ENCODE measurements at regions of chr5 and their contacts with region 1.

Region 1: GRCh38 chr5:136249678-136250266 is 56.8 kb upstream of the SMIM32 start:
- DNase-seq: peak; percentile 25
- H3K4me3 Mint-ChIP-seq: no peak overlapping the region
- H3K27ac Mint-ChIP-seq: no peak overlapping the region
- H3K4me1 Mint-ChIP-seq: no peaks in the 10 kb centered on the region
- H3K27me3 Mint-ChIP-seq: peaks cover 8% of the 10 kb centered on the region

Region 2: GRCh38 chr5:136222583-136223274 is 27.0 kb before region 1 on chr5:
- CTCF ChIA-PET with region 1: no interaction called
- POLR2A ChIA-PET with region 1: no interaction called
- intact Hi-C with region 1: no loop called
- DNase-seq: no peak
- H3K4me3 Mint-ChIP-seq: no peak overlapping the region
- H3K27ac Mint-ChIP-seq: no peak overlapping the region
- H3K4me1 Mint-ChIP-seq: no peaks in the 10 kb centered on the region
- H3K27me3 Mint-ChIP-seq: peaks cover 11% of the 10 kb centered on the region

Region 3: GRCh38 chr5:136605638-136606037 is 355.9 kb after region 1 on chr5:
- CTCF ChIA-PET with region 1: no interaction called
- POLR2A ChIA-PET with region 1: no interaction called
- intact Hi-C with region 1: no loop called
- DNase-seq: no peak
- H3K4me3 Mint-ChIP-seq: no peak overlapping the region
- H3K27ac Mint-ChIP-seq: no peak overlapping the region
- H3K4me1 Mint-ChIP-seq: no peaks in the 10 kb centered on the region
- H3K27me3 Mint-ChIP-seq: no peaks in the 10 kb centered on the region

Region 4: DNA sequence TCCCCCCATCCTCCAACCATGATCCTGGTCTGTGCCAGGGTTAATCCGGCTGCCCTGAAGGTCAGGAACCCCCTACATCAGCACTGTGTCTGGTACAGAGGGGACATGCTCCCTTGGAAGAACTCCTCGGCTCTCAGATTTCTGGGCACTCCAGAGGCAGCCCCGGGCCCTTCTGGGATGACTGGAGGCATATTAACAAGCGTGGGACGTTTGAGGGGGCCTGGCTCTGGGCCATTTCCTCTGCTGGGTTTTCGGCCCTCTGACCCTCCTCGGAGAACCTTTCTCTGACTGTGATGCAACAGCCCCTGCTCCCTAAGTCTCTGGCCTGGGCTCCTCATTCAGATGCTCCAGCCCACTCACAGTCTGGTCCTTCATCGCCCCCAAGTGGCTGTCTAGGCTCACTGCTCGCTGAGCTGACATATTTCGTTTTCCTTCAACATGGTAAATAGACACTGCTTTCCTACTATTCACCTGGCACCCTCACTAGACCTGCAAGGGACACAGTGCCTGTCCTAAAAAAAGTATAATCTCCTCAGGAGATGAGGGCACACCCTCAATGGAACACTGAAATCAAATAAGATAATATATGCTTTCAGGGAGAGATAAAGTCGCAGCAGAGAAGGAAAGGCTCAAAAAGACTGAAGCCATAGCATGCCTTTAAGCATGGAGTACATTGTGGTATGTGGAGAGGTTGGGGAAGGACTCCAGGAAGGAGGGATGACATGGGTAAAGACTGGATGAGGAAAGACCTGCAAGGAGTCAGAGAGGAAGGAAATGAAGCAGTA is 520.3 kb after region 1 on chr5:
- CTCF ChIA-PET with region 1: interaction called, 4 read pairs
- POLR2A ChIA-PET with region 1: no interaction called
- intact Hi-C with region 1: loop called (anchors 10 kb)
- DNase-seq: peak; percentile 45
- H3K4me3 Mint-ChIP-seq: no peak overlapping the region
- H3K27ac Mint-ChIP-seq: no peak overlapping the region
- H3K4me1 Mint-ChIP-seq: no peaks in the 10 kb centered on the region
- H3K27me3 Mint-ChIP-seq: no peaks in the 10 kb centered on the region